Psoas muscle (tissue), 8 donors: ENCODE measurements at regions of chr11 and their contacts with region 1.

Region 1: GRCh38 chr11:99418927-99419720 is 398.4 kb downstream of the CNTN5 start:
- DNase-seq: no peak
- ATAC-seq: no peak
- H3K4me3 ChIP-seq: no peak overlapping the region
- H3K27ac ChIP-seq: no peak overlapping the region
- H3K4me1 ChIP-seq: no peaks in the 10 kb centered on the region
- H3K27me3 ChIP-seq: no peaks in the 10 kb centered on the region
- CTCF ChIP-seq: no peak

Region 2: DNA sequence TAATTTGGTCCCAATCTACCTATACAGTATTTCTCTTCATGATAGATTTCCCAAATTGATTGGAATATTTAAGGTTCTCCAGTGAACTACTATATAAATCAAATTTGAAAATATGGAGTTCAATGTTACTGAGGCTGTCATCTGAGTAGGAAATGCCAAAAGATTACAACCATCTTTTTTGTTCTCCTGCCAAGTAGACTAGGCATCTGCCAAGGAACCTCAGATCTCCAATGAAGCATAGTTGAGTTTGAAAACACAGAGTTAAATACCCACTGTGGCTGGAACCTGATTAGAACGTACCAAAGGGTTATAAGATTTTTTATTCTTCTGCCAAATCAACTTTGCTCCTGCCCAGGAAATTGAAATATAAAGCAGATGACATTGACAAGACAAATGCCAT is 67.5 kb before region 1 on chr11:
- intact Hi-C with region 1: loop called in 1 of 2 experiments (anchors 10 kb)
- DNase-seq: no peak
- ATAC-seq: peak in 1 of 4 donors; percentile 56
- H3K4me3 ChIP-seq: no peak overlapping the region
- H3K27ac ChIP-seq: peak overlapping the region; percentile 70
- H3K4me1 ChIP-seq: peaks cover 18% of the 10 kb centered on the region
- H3K27me3 ChIP-seq: no peaks in the 10 kb centered on the region
- CTCF ChIP-seq: no peak